GM18951 (cell line): ENCODE measurements at regions of chr13 and their contacts with region 1.

Region 1: DNA sequence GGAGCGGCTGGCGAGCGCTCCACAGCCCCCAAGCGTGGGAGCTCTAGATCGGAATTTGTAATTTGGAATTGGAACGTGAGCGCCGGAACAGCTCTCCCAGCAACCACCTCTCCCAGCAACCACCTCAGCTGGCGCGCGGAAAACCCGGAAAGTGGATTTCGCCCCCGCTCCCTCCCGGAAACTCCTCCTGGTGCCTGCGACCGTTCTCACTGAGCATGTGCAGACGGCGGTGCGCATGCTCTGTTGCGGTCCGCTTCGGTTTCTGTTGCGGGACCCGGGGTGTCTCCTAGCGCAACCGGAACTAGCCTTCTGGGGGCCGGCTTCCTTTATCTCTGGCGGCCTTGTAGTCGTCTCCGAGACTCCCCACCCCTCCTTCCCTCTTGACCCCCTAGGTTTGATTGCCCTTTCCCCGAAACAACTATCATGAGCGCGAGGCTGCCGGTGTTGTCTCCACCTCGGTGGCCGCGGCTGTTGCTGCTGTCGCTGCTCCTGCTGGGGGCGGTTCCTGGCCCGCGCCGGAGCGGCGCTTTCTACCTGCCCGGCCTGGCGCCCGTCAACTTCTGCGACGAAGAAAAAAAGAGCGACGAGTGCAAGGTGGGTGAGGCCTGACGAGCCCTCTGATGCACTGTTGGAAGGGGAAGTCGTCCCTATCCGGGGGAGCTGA is at the start of gene TM9SF2:
- POLR2A ChIP-seq: peak; percentile 84

Region 2: DNA sequence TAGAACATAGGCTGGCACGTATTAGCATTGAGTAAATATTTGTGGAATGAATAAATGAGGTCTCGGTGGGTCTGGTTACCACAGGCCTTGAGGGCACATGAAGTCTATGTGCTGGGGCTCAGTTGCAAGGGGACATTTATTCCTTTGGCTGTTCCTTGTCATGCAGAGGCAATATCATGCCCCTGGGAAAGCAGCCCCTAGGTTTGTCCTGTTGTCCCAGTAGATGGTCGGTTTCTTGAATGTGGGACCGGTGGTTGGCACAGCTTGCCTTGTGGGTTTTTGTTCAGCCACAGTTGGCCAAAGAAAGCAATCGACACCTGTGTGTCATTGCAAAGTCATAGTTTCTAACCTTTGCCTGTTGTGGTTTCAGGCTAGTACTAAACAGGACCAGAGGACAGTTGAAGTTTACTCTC is 169.4 kb before region 1 on chr13:
- in situ Hi-C with region 1: no loop called
- POLR2A ChIP-seq: no peak

Region 3: GRCh38 chr13:99386911-99387788 is 114.2 kb before region 1 on chr13:
- in situ Hi-C with region 1: loop called (anchors 10 kb)
- POLR2A ChIP-seq: no peak

Region 4: DNA sequence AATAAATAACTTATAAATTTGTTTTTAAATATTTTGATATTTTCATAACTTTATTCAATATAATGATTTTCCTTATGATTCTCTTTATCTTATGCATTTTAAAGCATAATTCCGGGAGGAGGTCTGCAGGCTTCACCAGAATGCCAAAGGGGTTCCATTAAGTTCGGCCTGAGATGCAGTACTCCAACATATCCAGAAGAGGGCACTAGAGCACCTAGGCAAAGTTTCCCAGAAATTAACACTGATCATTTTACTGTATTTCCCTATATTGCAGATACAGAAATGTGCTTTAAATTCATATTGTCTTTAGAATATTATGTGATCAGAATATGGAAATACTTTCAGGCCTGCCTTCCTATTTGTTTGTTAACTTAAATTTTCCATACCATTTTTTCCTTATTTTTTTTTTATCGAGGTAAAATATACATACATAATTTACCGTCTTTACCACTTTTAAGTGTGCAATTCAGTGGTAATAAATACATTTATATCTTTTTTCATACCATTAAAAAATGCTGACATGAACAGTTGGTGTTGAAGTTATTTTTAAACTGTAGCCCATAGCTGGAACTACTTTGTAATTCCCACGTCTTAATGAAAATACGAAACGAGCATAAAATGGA is 58.9 kb before region 1 on chr13:
- in situ Hi-C with region 1: loop called (anchors 10 kb)
- POLR2A ChIP-seq: no peak